K562 (cell line): ENCODE measurements at regions of chr3 and their contacts with region 1.

Region 1: DNA sequence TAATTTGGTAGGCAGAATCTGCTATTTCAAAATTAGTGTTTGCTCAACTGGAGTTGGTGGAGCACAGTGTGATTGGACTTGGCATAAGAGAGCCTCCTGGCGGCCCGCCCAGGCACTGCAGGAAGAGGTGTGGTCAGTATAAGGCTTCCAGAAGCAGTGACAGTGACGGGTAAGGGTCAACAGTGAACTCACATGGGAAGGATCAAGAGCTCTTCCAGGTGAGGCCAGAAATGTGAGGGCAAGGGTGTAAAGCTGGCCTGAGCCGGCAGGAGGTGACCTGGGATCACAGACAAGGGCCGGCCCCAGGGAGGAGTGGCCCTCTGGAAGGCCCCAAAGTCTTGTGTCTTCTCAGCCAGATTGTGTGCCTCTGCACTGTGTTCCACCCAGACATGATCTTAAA is 93.2 kb upstream of the RNF7 start:
- DNase-seq: peak; percentile 72 to 82 (median 73)
- ATAC-seq: peak; percentile 91
- H3K4me3 ChIP-seq: no peak overlapping the region
- H3K27ac ChIP-seq: no peak overlapping the region
- H3K4me1 ChIP-seq: peaks cover 0 to 11% of the 10 kb centered on the region in 2 experiments; a peak in 3 of 5 replicates
- H3K27me3 ChIP-seq: no peaks in the 10 kb centered on the region
- CTCF ChIP-seq: peak; percentile 73 to 94 (median 82)
- EP300 ChIP-seq: no peak
- POLR2A ChIP-seq: no peak
- RAD21 ChIP-seq: peak; percentile 57 to 82

Region 2: DNA sequence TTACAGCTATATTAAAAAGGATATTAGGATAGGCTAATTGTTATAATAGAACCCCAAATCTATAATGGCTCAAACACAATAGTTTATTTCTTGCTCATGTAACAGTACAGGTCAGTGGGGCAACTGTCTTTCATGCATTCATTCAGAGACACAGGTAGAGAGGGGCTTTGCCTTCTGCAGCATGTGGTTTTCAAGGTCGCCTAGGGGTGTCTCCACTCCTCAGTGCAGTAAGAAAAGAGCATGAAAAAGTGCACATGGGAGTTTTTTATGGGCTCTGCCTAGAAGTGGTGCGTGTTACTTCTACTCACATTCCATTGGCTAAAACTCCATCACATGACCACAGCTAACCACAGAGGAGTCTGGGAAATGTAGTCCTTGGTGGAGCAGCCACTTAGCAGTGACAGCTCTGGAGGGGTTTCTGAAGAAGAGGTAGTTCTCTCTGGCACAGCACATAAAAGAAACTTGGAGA is 274.8 kb before region 1 on chr3:
- CTCF ChIA-PET with region 1: no interaction called
- POLR2A ChIA-PET with region 1: no interaction called
- in situ Hi-C with region 1: no loop called
- intact Hi-C with region 1: no loop called
- DNase-seq: peak; percentile 82 to 94 (median 87)
- ATAC-seq: peak; percentile 89
- H3K4me3 ChIP-seq: no peak overlapping the region; the same call in 1 of the 2 replicates
- H3K27ac ChIP-seq: peak overlapping the region; percentile 95
- H3K4me1 ChIP-seq: peaks cover 25 to 42% of the 10 kb centered on the region in 2 experiments
- H3K27me3 ChIP-seq: no peaks in the 10 kb centered on the region
- CTCF ChIP-seq: peak; percentile 61 to 73 (median 65)
- EP300 ChIP-seq: peak; percentile 34; the same call in 1 of the 2 replicates
- POLR2A ChIP-seq: peak; percentile 65
- RAD21 ChIP-seq: peak; percentile 49 to 58

Region 3: DNA sequence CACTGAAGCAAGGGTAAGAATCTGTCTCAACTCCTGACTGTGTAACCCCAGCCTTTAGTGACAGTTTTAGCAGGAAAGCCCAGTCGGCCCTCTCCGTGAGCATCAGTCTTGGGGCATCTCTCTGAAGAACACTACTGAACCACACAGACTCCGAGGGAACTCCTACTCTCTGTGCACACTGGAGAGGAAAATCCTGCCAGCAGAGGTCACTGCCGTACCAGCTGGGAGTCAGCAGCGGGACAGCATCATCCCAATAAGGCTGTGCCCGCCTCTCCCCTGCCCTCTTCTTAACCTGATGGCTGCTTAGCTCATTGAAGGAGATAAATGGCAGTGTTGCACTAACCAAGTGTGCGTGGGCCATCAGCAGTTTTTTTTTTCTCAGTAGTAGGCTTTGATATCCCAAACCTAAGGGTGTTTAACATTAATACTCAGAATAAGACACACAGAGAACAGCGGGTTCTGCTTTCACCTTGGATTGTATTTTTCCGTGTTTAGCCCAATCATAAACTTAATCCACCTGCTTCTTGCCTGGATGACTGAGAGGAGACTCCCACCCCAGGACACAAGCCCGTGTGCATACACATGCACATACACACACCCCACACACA is 184.7 kb before region 1 on chr3:
- CTCF ChIA-PET with region 1: no interaction called
- POLR2A ChIA-PET with region 1: no interaction called
- in situ Hi-C with region 1: no loop called
- intact Hi-C with region 1: loop called (anchors 2 kb)
- DNase-seq: peak; percentile 70 to 91 (median 77)
- ATAC-seq: peak; percentile 97
- H3K4me3 ChIP-seq: no peak overlapping the region
- H3K27ac ChIP-seq: no peak overlapping the region
- H3K4me1 ChIP-seq: peaks cover 12 to 30% of the 10 kb centered on the region in 2 experiments; a peak in 4 of 5 replicates
- H3K27me3 ChIP-seq: no peaks in the 10 kb centered on the region
- CTCF ChIP-seq: peak; percentile 91 to 96 (median 93)
- EP300 ChIP-seq: no peak
- POLR2A ChIP-seq: no peak
- RAD21 ChIP-seq: peak; percentile 96 to 97

Region 4: DNA sequence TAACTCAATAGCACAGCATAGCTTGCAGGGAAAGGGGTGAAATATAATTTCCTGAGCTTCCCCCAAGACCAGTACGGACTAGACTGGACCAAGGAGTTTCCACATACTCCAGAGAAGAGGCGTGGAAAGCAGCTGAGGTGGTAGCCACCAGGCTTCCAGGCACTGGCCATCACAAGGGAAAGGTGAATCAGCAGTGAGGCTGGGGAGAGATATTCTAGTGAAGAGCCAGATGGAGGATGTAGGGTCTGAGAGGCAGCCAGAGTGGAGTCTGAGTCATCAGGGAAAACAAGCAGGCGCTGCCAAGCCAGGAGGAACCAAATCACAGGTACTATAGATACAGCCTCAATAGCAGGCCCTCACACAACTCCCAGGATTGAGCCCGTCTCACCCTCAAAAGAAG is 167.7 kb before region 1 on chr3:
- CTCF ChIA-PET with region 1: no interaction called
- POLR2A ChIA-PET with region 1: no interaction called
- in situ Hi-C with region 1: loop called (anchors 10 kb)
- intact Hi-C with region 1: no loop called
- DNase-seq: peak in 2 of 4 experiments; percentile 56 to 66
- ATAC-seq: peak; percentile 80
- H3K4me3 ChIP-seq: no peak overlapping the region
- H3K27ac ChIP-seq: no peak overlapping the region
- H3K4me1 ChIP-seq: peaks cover 3 to 9% of the 10 kb centered on the region in 2 experiments; a peak in 2 of 5 replicates
- H3K27me3 ChIP-seq: no peaks in the 10 kb centered on the region
- CTCF ChIP-seq: no peak
- EP300 ChIP-seq: no peak
- POLR2A ChIP-seq: no peak
- RAD21 ChIP-seq: 0 out of 4 replicates have a peak, but pooled peaks of 1 of the 2 experiments have one; percentile 4

Region 5: GRCh38 chr3:141498598-141499223 is 146.2 kb before region 1 on chr3:
- CTCF ChIA-PET with region 1: no interaction called
- POLR2A ChIA-PET with region 1: no interaction called
- in situ Hi-C with region 1: no loop called
- intact Hi-C with region 1: no loop called
- DNase-seq: no peak
- ATAC-seq: peak; percentile 32; the same call in 2 of the 3 replicates
- H3K4me3 ChIP-seq: no peak overlapping the region
- H3K27ac ChIP-seq: no peak overlapping the region
- H3K4me1 ChIP-seq: no peaks in the 10 kb centered on the region; a peak in 1 of 5 replicates
- H3K27me3 ChIP-seq: no peaks in the 10 kb centered on the region
- CTCF ChIP-seq: no peak
- EP300 ChIP-seq: no peak
- POLR2A ChIP-seq: no peak
- RAD21 ChIP-seq: no peak

Region 6: GRCh38 chr3:141575879-141576743 is 68.8 kb before region 1 on chr3:
- CTCF ChIA-PET with region 1: no interaction called
- POLR2A ChIA-PET with region 1: no interaction called
- in situ Hi-C with region 1: no loop called
- intact Hi-C with region 1: loop called (anchors 1 kb)
- DNase-seq: peak in 2 of 4 experiments; percentile 10 to 15
- ATAC-seq: peak; percentile 83
- H3K4me3 ChIP-seq: no peak overlapping the region
- H3K27ac ChIP-seq: no peak overlapping the region
- H3K4me1 ChIP-seq: no peaks in the 10 kb centered on the region
- H3K27me3 ChIP-seq: no peaks in the 10 kb centered on the region
- CTCF ChIP-seq: peak in 2 of 3 experiments; percentile 19 to 62; a peak in 4 of 6 replicates
- EP300 ChIP-seq: 0 out of 2 replicates have a peak, but pooled peaks have one; percentile 27
- POLR2A ChIP-seq: no peak
- RAD21 ChIP-seq: peak; percentile 66 to 68

Region 7: DNA sequence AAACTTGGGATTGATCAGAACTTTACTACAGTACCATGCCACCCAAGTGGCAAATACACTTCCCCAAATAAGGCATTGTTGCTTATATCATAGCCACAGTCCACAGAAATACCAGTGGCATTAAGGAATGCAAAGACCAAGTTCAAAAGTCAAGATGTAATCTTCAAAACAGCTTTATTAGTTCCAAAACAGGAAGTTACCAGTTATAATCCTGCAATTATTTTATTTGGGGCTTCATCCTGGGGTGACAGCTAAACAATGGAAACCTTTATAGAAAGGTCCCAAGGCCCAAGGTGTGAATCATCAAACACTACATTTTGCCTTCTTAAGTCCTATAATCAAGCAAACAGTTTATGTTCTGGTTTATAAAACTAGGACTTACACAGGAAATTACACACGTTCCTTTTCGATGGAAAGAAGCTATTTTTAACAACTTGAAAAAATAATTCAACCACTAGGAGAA is 62.8 kb after region 1 on chr3:
- CTCF ChIA-PET with region 1: no interaction called
- POLR2A ChIA-PET with region 1: no interaction called
- in situ Hi-C with region 1: no loop called
- intact Hi-C with region 1: no loop called
- DNase-seq: no peak
- ATAC-seq: no peak
- H3K4me3 ChIP-seq: no peak overlapping the region
- H3K27ac ChIP-seq: no peak overlapping the region
- H3K4me1 ChIP-seq: peaks cover 0 to 5% of the 10 kb centered on the region in 2 experiments; a peak in 2 of 5 replicates
- H3K27me3 ChIP-seq: no peaks in the 10 kb centered on the region
- CTCF ChIP-seq: no peak
- EP300 ChIP-seq: no peak
- POLR2A ChIP-seq: no peak
- RAD21 ChIP-seq: no peak